Activated CD8-positive, alpha-beta T cell treated with anti-CD3 and anti-CD28 coated beads, Interleukin-2, amount 10 ng/mL, durations not matched to agents 7 days and 5 days (primary cell): ENCODE measurements at regions of chr2 and their contacts with region 1.

Region 1: GRCh38 chr2:227406177-227407031 is 18.7 kb upstream of the SCYGR1 start:
- DNase-seq: no peak
- ATAC-seq: no peak
- H3K4me3 Mint-ChIP-seq: no peak overlapping the region
- H3K27ac Mint-ChIP-seq: no peak overlapping the region
- H3K4me1 Mint-ChIP-seq: peaks cover 20% of the 10 kb centered on the region
- H3K27me3 Mint-ChIP-seq: no peaks in the 10 kb centered on the region

Region 2: DNA sequence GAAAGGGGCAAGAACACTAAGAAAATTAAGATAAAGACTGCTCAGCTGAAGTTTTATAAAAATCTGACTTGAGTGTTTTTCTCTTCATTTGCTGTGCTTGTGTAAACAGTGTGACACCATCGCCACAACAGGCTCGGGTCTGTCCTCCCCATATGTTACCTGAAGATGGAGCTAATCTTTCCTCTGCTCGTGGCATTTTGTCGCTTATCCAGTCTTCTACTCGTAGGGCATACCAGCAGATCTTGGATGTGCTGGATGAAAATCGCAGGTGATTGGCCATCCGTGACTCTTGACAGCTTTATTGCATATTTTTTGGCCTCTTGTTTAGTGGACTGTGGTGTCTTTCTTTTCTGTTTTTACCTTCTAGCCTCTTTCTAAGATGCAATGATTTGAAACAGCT is 59.3 kb before region 1 on chr2:
- CTCF ChIA-PET with region 1: no interaction called
- POLR2A ChIA-PET with region 1: no interaction called
- DNase-seq: no peak
- ATAC-seq: no peak
- H3K4me3 Mint-ChIP-seq: no peak overlapping the region
- H3K27ac Mint-ChIP-seq: no peak overlapping the region
- H3K4me1 Mint-ChIP-seq: no peaks in the 10 kb centered on the region
- H3K27me3 Mint-ChIP-seq: no peaks in the 10 kb centered on the region

Region 3: GRCh38 chr2:227471924-227472264 is 65.5 kb after region 1 on chr2 and contains the start of gene AGFG1:
- CTCF ChIA-PET with region 1: interaction called, 20 read pairs
- POLR2A ChIA-PET with region 1: no interaction called
- DNase-seq: peak; percentile 86
- ATAC-seq: peak; percentile 88
- H3K4me3 Mint-ChIP-seq: peak within 1 kb of the TSS; percentile 86
- H3K27ac Mint-ChIP-seq: peak within 1 kb of the TSS; percentile 78
- H3K4me1 Mint-ChIP-seq: peaks cover 44% of the 10 kb centered on the region
- H3K27me3 Mint-ChIP-seq: no peaks in the 10 kb centered on the region
- total RNA-seq, gene AGFG1: 65.6 to 71.2 TPM

Region 4: DNA sequence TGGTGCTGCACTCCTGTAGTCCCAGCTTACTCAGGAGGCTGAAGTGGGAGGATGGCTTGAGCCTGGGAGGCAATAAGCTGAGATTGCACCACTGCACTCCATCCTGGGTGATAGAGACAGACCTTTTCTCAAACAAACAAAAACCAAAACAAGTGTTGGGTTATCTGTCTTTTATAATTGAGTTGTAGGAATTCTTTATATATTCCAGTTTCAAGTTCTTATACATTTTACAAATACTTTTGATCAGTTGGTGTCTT is 112.6 kb after region 1 on chr2:
- CTCF ChIA-PET with region 1: no interaction called
- POLR2A ChIA-PET with region 1: no interaction called
- DNase-seq: no peak
- ATAC-seq: no peak
- H3K4me3 Mint-ChIP-seq: no peak overlapping the region
- H3K27ac Mint-ChIP-seq: no peak overlapping the region
- H3K4me1 Mint-ChIP-seq: no peaks in the 10 kb centered on the region
- H3K27me3 Mint-ChIP-seq: no peaks in the 10 kb centered on the region